CD4-positive, alpha-beta T cell (primary cell): ENCODE measurements at regions of chr12 and their contacts with region 1.

Region 1: DNA sequence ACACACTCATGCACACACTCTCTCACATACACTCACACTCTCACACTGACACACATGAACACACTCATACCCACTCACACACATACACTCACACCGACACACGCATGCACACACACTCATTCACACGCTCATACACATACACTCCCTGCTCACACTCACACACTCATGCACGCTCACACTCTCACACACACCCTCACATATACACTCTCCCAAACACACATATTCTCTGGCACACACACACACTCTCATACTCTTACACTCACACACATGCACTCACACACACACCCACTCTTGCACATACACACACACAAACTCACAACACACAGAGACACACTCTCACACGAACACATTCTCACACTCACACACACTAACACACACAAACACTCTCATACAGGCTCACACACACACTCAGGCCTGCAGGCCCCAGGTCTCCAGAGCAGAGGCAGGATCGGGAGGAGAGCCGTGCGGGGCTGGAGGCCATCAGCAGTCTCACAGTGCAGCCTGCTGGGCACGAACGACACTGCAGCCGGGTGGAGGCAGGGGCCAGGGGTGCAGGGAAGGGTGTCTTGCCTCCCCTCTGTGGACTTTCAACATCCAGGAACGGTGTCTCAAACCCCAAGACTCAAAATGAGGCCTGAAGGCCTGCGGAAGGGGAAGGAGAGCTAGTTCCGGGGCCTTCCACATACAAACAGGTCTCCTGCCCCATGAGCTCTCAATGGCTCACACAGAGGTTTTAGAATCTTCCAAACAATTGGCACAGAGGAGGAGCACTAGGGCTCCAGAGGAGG is 148.7 kb downstream of the ANO2 start:
- DNase-seq: peak in 4 of 14 experiments; percentile 2 to 29 (median 10)
- ATAC-seq: peak; percentile 41
- H3K4me3 ChIP-seq: no peak overlapping the region
- H3K4me3 Mint-ChIP-seq: no peak overlapping the region
- H3K27ac ChIP-seq: no peak overlapping the region
- H3K27ac Mint-ChIP-seq: no peak overlapping the region
- H3K4me1 ChIP-seq: no peaks in the 10 kb centered on the region
- H3K4me1 Mint-ChIP-seq: no peaks in the 10 kb centered on the region
- H3K27me3 ChIP-seq: no peaks in the 10 kb centered on the region
- H3K27me3 Mint-ChIP-seq: no peaks in the 10 kb centered on the region
- CTCF ChIP-seq: peak; percentile 27

Region 2: GRCh38 chr12:5022465-5023061 is 773.8 kb before region 1 on chr12:
- CTCF ChIA-PET with region 1: no interaction called
- POLR2A ChIA-PET with region 1: no interaction called
- intact Hi-C with region 1: loop called in 1 of 2 experiments (anchors 5 kb)
- DNase-seq: peak in 10 of 14 experiments; percentile 5 to 64 (median 11)
- ATAC-seq: no peak
- H3K4me3 ChIP-seq: no peak overlapping the region
- H3K4me3 Mint-ChIP-seq: no peak overlapping the region
- H3K27ac ChIP-seq: no peak overlapping the region
- H3K27ac Mint-ChIP-seq: no peak overlapping the region
- H3K4me1 ChIP-seq: no peaks in the 10 kb centered on the region
- H3K4me1 Mint-ChIP-seq: no peaks in the 10 kb centered on the region
- H3K27me3 ChIP-seq: peaks cover 3 to 4% of the 10 kb centered on the region in 2 experiments
- H3K27me3 Mint-ChIP-seq: peaks cover 46% of the 10 kb centered on the region
- CTCF ChIP-seq: peak; percentile 90

Region 3: DNA sequence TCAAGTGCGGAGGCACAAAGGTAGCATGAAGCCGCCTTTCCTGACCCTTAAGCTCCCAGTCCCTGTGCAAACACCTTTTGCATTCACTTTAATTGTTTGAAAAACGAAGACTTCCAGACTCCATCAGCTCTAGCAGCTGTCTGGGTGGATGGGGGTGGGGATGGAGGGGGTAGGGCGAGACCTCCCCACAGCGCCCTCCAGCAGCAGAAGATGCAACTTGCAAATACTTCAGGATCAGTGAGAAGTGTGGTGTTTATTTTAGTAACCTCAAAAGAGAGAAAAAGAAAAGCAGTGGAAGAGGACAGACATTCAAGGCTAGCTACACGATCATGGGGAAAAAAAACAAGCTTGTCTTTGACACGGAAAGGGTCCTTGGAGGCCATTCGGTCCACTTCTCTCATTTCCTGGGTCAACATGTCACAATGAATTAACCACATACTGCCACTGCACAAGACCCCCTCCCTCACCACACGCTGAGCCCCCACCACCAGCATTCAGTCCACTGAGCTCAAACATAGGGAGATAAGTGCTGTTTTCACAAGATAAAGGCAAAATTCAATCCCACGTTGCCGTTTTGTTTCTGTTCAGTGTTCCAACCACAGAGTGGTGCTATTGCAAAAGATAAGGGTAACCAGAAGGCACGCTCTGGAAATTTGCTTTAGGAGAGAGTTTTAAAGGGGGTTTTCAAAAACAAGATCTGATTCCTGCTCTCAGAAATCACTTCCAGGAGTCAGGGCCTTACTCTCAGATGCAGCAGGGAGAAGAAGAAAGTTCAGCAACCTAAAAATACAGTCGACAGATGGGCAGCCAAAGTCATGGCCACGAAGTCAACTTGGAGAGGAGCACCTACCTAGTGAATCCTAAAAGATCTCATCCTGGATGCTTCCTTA is 367.8 kb before region 1 on chr12:
- CTCF ChIA-PET with region 1: no interaction called
- POLR2A ChIA-PET with region 1: no interaction called
- intact Hi-C with region 1: loop called in 1 of 2 experiments (anchors 5 kb)
- DNase-seq: no peak
- ATAC-seq: no peak
- H3K4me3 ChIP-seq: no peak overlapping the region
- H3K4me3 Mint-ChIP-seq: no peak overlapping the region
- H3K27ac ChIP-seq: no peak overlapping the region
- H3K27ac Mint-ChIP-seq: no peak overlapping the region
- H3K4me1 ChIP-seq: peaks cover 6% of the 10 kb centered on the region
- H3K4me1 Mint-ChIP-seq: peaks cover 5% of the 10 kb centered on the region
- H3K27me3 ChIP-seq: peaks cover 37 to 45% of the 10 kb centered on the region in 2 experiments
- H3K27me3 Mint-ChIP-seq: peaks cover 62% of the 10 kb centered on the region
- CTCF ChIP-seq: no peak

Region 4: GRCh38 chr12:5745265-5745888 is 51.0 kb before region 1 on chr12:
- CTCF ChIA-PET with region 1: no interaction called
- POLR2A ChIA-PET with region 1: interaction called, 3 read pairs
- intact Hi-C with region 1: loop called (anchors 1 to 2 kb)
- DNase-seq: peak in 12 of 14 experiments; percentile 5 to 63 (median 28)
- ATAC-seq: peak; percentile 44
- H3K4me3 ChIP-seq: no peak overlapping the region
- H3K4me3 Mint-ChIP-seq: no peak overlapping the region
- H3K27ac ChIP-seq: no peak overlapping the region
- H3K27ac Mint-ChIP-seq: no peak overlapping the region
- H3K4me1 ChIP-seq: no peaks in the 10 kb centered on the region
- H3K4me1 Mint-ChIP-seq: peaks cover 40% of the 10 kb centered on the region
- H3K27me3 ChIP-seq: peaks cover 0 to 9% of the 10 kb centered on the region in 2 experiments
- H3K27me3 Mint-ChIP-seq: peaks cover 4% of the 10 kb centered on the region
- CTCF ChIP-seq: peak; percentile 40

Region 5: GRCh38 chr12:5783289-5783920 is 13.0 kb before region 1 on chr12:
- CTCF ChIA-PET with region 1: no interaction called
- POLR2A ChIA-PET with region 1: no interaction called
- intact Hi-C with region 1: no loop called
- DNase-seq: no peak
- ATAC-seq: no peak
- H3K4me3 ChIP-seq: no peak overlapping the region
- H3K4me3 Mint-ChIP-seq: no peak overlapping the region
- H3K27ac ChIP-seq: no peak overlapping the region
- H3K27ac Mint-ChIP-seq: no peak overlapping the region
- H3K4me1 ChIP-seq: no peaks in the 10 kb centered on the region
- H3K4me1 Mint-ChIP-seq: no peaks in the 10 kb centered on the region
- H3K27me3 ChIP-seq: no peaks in the 10 kb centered on the region
- H3K27me3 Mint-ChIP-seq: no peaks in the 10 kb centered on the region
- CTCF ChIP-seq: no peak